ENCODE measurements at regions of chr19 and their contacts with region 1.

Region 1: DNA sequence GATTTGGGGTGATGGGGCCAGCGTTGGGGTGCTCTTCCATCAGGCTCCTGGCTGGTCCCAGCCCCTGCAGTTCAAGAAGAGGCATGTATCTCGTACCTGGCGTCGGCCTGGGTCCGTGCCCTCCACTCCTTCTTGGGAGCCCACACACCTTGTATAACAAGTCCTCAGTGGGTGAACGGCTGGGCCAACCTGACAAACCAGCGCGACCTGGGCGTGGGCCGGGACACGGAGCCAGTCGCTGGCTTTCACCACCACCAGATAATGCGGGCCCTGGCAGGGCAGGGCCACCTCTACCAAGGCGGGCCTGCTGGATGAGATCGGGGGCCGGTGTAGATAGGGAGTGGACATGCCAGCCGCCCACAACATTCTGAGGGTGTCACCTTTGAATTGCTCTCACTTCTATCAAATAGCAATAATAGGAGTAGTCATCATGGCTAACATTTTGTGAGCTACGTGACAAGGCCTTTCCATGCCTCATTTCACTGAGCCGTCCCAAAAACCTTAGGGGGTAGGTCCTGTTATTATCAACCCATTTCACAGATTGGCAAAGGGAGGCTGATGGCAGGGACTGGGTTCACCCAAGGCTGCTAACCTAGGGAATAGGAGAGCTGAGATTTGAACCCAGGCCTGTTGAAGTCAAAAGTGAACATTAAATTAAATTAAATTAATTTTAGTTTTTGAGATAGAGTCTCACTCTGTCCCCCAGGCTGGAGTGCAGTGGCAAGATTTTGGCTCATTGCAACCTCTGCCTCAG is 3.5 kb downstream of the CYP4F22 start:
- DNase-seq: no peak
- H3K4me3 Mint-ChIP-seq: no peak overlapping the region
- H3K27ac Mint-ChIP-seq: no peak overlapping the region
- H3K4me1 Mint-ChIP-seq: peaks cover 24% of the 10 kb centered on the region
- H3K27me3 Mint-ChIP-seq: peaks cover 28% of the 10 kb centered on the region

Region 2: GRCh38 chr19:15532779-15533521 is 21.1 kb after region 1 on chr19:
- intact Hi-C with region 1: loop called (anchors 1 kb)
- DNase-seq: no peak
- H3K4me3 Mint-ChIP-seq: no peak overlapping the region
- H3K27ac Mint-ChIP-seq: peak overlapping the region; percentile 8
- H3K4me1 Mint-ChIP-seq: peaks cover 29% of the 10 kb centered on the region
- H3K27me3 Mint-ChIP-seq: peaks cover 7% of the 10 kb centered on the region

Measured in activated T-helper 1 cell treated with anti-CD3 and anti-CD28 coated beads, Interleukin-12 subunit alpha, Interleukin-12 subunit beta, Interleukin-2, Interleukin-4 antibody, amounts not matched to agents 30 ng/mL and 10 ng/mL and 1 ng/mL, durations not matched to agents 14 hours and 24 hours and 36 hours (primary cell).